SK-N-SH (cell line): ENCODE measurements at regions of chr20 and their contacts with region 1.

Region 1: DNA sequence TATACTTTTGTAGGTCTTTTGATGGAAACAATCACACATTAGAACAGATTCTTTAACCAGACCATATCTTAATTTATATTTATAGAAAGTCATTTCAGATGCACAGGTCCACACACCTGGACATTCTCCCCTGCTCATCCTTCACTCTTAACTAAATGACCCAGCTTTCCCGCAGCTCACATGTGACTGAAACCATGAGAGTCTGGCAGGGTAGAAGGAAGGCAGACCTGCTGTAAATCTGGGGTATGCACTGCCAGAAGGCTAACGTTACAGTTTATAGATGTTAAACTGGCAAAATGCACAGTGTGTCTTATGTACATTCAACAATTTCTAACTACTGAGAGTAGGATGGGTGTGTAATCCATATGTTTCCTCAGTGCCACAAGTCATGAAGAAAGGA is 359.5 kb upstream of the SPTLC3 start:
- DNase-seq: no peak
- H3K4me3 ChIP-seq: no peak overlapping the region
- H3K27ac ChIP-seq: no peak overlapping the region
- H3K4me1 ChIP-seq: no peaks in the 10 kb centered on the region; a peak in 1 of 4 replicates
- H3K27me3 ChIP-seq: no peaks in the 10 kb centered on the region
- CTCF ChIP-seq: no peak
- EP300 ChIP-seq: no peak
- RAD21 ChIP-seq: no peak

Region 2: GRCh38 chr20:12660918-12661317 is 11.7 kb after region 1 on chr20:
- CTCF ChIA-PET with region 1: interaction called, 13 read pairs
- POLR2A ChIA-PET with region 1: no interaction called
- DNase-seq: peak; percentile 17
- H3K4me3 ChIP-seq: no peak overlapping the region; a peak in 1 of 4 replicates
- H3K27ac ChIP-seq: no peak overlapping the region
- H3K4me1 ChIP-seq: no peaks in the 10 kb centered on the region
- H3K27me3 ChIP-seq: no peaks in the 10 kb centered on the region
- CTCF ChIP-seq: 0 out of 2 replicates have a peak, but pooled peaks have one; percentile 13
- EP300 ChIP-seq: no peak
- RAD21 ChIP-seq: peak; percentile 52

Region 3: DNA sequence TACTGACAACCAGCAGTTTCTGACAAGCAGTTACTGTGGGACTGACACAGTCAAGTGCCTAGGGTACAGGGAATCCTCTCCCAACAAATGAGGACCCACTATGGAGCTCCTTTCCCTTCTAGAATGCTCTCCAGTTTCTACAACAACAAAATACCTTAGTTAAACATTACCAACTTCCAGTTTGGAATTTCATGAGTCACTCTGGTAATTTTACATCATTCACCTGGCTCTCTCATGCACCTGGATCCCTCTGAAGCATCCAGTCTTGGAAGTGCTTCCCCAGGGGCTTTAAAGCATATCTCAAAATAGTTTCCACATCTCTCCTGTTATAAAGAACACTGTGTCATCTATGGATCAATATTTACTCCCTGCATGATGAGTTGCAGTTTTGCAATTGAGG is 72.9 kb after region 1 on chr20:
- CTCF ChIA-PET with region 1: no interaction called
- POLR2A ChIA-PET with region 1: no interaction called
- DNase-seq: no peak
- H3K4me3 ChIP-seq: no peak overlapping the region
- H3K27ac ChIP-seq: no peak overlapping the region
- H3K4me1 ChIP-seq: no peaks in the 10 kb centered on the region
- H3K27me3 ChIP-seq: no peaks in the 10 kb centered on the region
- CTCF ChIP-seq: no peak
- EP300 ChIP-seq: no peak
- RAD21 ChIP-seq: no peak